CD8-positive, alpha-beta memory T cell (primary cell): ENCODE measurements at regions of chr14 and their contacts with region 1.

Region 1: DNA sequence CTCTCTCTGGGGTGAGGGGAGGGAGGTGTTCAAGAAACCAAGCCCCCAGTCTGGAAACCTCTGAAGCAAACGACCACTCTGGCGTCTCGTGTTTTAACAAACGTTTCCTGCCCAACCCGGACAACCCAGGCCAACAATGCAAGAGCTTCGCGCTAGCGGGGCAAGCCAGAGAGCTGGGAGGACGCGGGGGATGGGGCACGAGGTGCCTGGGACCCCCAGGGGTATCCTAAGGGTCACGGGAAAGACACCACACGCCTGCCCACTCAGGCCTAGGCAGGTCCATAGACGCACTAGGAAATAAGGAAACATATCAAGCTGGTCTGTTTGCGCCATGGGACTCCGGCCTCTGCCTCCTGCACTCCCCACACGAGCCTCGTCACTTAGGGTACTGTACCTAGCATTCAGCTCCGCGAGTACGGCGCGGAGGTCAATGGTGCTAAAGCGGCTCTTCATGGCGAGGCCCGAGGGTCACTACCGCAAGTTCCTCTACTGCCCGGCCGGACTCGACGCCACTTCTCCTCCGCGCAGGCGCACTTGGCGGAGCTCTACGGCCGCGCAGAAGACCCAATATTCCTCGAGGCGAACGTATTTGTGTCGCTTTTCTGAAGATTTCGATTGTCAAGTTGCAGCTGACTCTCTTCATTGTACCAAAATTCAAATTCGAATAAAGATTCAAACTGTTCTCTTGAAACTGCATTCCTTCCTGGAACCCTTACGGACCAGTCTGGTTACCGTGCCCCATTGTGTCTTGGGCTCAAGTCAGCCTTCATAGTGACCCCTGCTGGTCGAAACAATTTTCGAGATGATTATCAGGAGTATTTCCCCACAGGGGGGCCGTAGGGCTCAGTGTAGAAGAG is at the start of gene NEMF:
- DNase-seq: peak; percentile 59 to 82 (median 72)
- H3K4me3 ChIP-seq: peak within 1 kb of the TSS; percentile 93
- H3K4me3 Mint-ChIP-seq: peak within 1 kb of the TSS; percentile 94 to 99 (median 96)
- H3K27ac ChIP-seq: peak within 1 kb of the TSS; percentile 79
- H3K27ac Mint-ChIP-seq: peak within 1 kb of the TSS; percentile 83 to 99 (median 96)
- H3K4me1 ChIP-seq: peaks cover 28% of the 10 kb centered on the region
- H3K4me1 Mint-ChIP-seq: peaks cover 40 to 51% (median 50%) of the 10 kb centered on the region in 3 donors
- H3K27me3 ChIP-seq: no peaks in the 10 kb centered on the region
- H3K27me3 Mint-ChIP-seq: no peaks in the 10 kb centered on the region
- total RNA-seq, gene NEMF: 69.2 to 71.9 TPM

Region 2: GRCh38 chr14:49633640-49634546 is 218.6 kb before region 1 on chr14:
- CTCF ChIA-PET with region 1: interaction called, 17 read pairs
- POLR2A ChIA-PET with region 1: interaction called, 8 read pairs
- DNase-seq: peak; percentile 90 to 96 (median 94)
- H3K4me3 ChIP-seq: peak overlapping the region; percentile 96
- H3K4me3 Mint-ChIP-seq: peak overlapping the region; percentile 92 to 100 (median 95)
- H3K27ac ChIP-seq: peak overlapping the region; percentile 99
- H3K27ac Mint-ChIP-seq: peak overlapping the region; percentile 91 to 100 (median 95)
- H3K4me1 ChIP-seq: peaks cover 32% of the 10 kb centered on the region
- H3K4me1 Mint-ChIP-seq: peaks cover 47 to 78% (median 60%) of the 10 kb centered on the region in 3 donors
- H3K27me3 ChIP-seq: no peaks in the 10 kb centered on the region
- H3K27me3 Mint-ChIP-seq: peaks cover 0 to 1% of the 10 kb centered on the region in 2 donors

Region 3: DNA sequence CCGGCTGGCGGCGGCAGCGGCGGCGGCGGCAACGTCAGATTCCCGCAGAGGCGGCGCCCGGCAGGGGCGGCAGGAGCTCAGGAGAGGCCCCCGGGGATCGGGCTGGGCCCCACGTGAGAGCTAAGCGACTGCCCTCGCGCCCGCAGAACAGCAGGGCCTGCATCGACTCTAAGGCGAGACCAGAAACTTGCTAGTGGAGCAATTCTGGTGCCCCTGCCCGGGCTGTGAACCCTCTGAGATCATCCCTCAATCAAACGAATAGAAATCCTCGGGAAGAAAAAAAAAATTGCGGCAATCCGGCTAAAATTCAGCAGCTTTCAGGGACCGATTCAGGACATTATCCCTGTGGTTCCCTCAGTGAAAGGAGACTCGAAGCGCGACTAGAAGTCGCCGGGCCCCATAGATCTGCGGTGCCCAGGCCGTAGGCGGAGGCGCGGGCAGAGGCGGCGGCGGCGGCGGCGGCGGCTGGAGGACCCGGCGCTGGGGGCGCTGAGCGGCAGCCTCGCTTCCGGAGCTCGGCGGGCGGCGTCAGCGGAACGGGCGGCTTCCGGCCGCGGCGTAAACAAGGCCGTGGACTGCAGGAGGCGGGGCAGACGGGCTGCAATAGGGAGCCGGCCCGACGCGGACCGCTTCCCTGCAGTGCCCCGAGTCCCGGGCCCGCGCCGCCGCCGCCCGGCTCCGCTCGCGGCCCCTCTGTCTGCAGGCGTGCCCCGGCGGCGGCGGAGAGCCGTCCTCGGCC is 84.8 kb before region 1 on chr14 and contains the start of gene KLHDC2:
- CTCF ChIA-PET with region 1: interaction called, 6 read pairs
- POLR2A ChIA-PET with region 1: interaction called, 15 read pairs
- DNase-seq: peak; percentile 83 to 91 (median 89)
- H3K4me3 ChIP-seq: peak within 1 kb of the TSS; percentile 99
- H3K4me3 Mint-ChIP-seq: peak within 1 kb of the TSS; percentile 96 to 99 (median 98)
- H3K27ac ChIP-seq: peak within 1 kb of the TSS; percentile 98
- H3K27ac Mint-ChIP-seq: peak within 1 kb of the TSS; percentile 98 to 100 (median 99)
- H3K4me1 ChIP-seq: peaks cover 28% of the 10 kb centered on the region
- H3K4me1 Mint-ChIP-seq: peaks cover 30 to 43% (median 42%) of the 10 kb centered on the region in 3 donors
- H3K27me3 ChIP-seq: no peaks in the 10 kb centered on the region
- H3K27me3 Mint-ChIP-seq: peaks cover 0 to 3% of the 10 kb centered on the region in 2 donors
- total RNA-seq, gene KLHDC2: 28.9 to 29.0 TPM

Region 4: GRCh38 chr14:49778421-49778820 is 74.1 kb before region 1 on chr14:
- CTCF ChIA-PET with region 1: no interaction called
- POLR2A ChIA-PET with region 1: no interaction called
- DNase-seq: no peak
- H3K4me3 ChIP-seq: no peak overlapping the region
- H3K4me3 Mint-ChIP-seq: no peak overlapping the region
- H3K27ac ChIP-seq: no peak overlapping the region
- H3K27ac Mint-ChIP-seq: no peak overlapping the region
- H3K4me1 ChIP-seq: no peaks in the 10 kb centered on the region
- H3K4me1 Mint-ChIP-seq: peaks cover 10 to 23% (median 18%) of the 10 kb centered on the region in 3 donors
- H3K27me3 ChIP-seq: no peaks in the 10 kb centered on the region
- H3K27me3 Mint-ChIP-seq: no peaks in the 10 kb centered on the region

Region 5: GRCh38 chr14:49828640-49829039 is 23.9 kb before region 1 on chr14:
- CTCF ChIA-PET with region 1: interaction called, 15 read pairs
- POLR2A ChIA-PET with region 1: no interaction called
- DNase-seq: no peak
- H3K4me3 ChIP-seq: no peak overlapping the region
- H3K4me3 Mint-ChIP-seq: no peak overlapping the region
- H3K27ac ChIP-seq: no peak overlapping the region
- H3K27ac Mint-ChIP-seq: no peak overlapping the region
- H3K4me1 ChIP-seq: no peaks in the 10 kb centered on the region
- H3K4me1 Mint-ChIP-seq: peaks cover 6 to 8% (median 7%) of the 10 kb centered on the region in 3 donors
- H3K27me3 ChIP-seq: no peaks in the 10 kb centered on the region
- H3K27me3 Mint-ChIP-seq: no peaks in the 10 kb centered on the region

Region 6: DNA sequence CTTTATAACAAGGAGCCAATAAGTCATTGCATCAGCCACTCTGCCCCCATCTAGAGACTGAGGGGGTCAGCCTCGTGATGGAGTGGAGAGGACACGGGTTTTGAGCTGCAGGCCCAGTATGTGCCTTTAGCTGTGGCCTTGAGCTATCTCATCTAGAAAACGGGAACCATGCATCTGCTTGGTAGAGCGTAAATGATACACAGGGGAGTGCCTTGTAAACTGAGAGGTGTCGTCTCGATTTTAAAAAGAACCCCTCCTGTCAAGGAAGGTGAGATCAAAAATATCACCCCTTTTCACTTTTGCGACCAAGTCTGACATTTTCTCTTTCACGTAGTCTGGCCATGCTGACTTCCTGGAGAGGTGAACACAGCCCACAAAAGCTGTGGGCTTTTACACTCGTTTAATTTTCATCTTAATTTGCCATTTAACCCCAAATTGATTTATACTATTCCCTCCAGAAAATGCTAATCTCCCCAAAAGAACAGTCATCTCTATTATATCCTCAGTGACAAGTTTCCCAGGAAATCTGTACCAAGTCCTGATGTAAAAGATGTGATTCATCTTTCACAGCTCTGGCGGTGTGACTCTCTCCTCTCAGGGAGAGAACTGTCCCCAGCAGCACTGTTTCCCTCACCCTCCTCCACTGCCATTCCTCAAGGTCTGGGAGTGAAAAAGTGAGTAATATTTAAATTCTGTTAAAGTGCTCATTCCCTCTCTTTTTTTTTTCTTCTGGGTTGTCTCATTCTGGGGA is 233.2 kb after region 1 on chr14:
- CTCF ChIA-PET with region 1: interaction called, 10 read pairs
- POLR2A ChIA-PET with region 1: no interaction called
- DNase-seq: peak; percentile 21 to 54 (median 44)
- H3K4me3 ChIP-seq: peak overlapping the region; percentile 7
- H3K4me3 Mint-ChIP-seq: peak overlapping the region; percentile 6 to 89 (median 71)
- H3K27ac ChIP-seq: peak overlapping the region; percentile 35
- H3K27ac Mint-ChIP-seq: peak overlapping the region; percentile 89 to 99 (median 97)
- H3K4me1 ChIP-seq: peaks cover 93% of the 10 kb centered on the region
- H3K4me1 Mint-ChIP-seq: peaks cover 75 to 93% (median 86%) of the 10 kb centered on the region in 3 donors
- H3K27me3 ChIP-seq: no peaks in the 10 kb centered on the region
- H3K27me3 Mint-ChIP-seq: no peaks in the 10 kb centered on the region

Region 7: GRCh38 chr14:50101417-50101816 is 248.9 kb after region 1 on chr14:
- CTCF ChIA-PET with region 1: interaction called, 17 read pairs
- POLR2A ChIA-PET with region 1: interaction called, 3 read pairs
- DNase-seq: no peak
- H3K4me3 ChIP-seq: no peak overlapping the region
- H3K4me3 Mint-ChIP-seq: no peak overlapping the region
- H3K27ac ChIP-seq: no peak overlapping the region
- H3K27ac Mint-ChIP-seq: peak overlapping the region in 2 of 8 donors; percentile 74 to 87
- H3K4me1 ChIP-seq: peaks cover 55% of the 10 kb centered on the region
- H3K4me1 Mint-ChIP-seq: peaks cover 37 to 62% (median 53%) of the 10 kb centered on the region in 3 donors
- H3K27me3 ChIP-seq: no peaks in the 10 kb centered on the region
- H3K27me3 Mint-ChIP-seq: no peaks in the 10 kb centered on the region

Region 8: GRCh38 chr14:50116181-50116956 is 263.8 kb after region 1 on chr14 and contains the start of gene VCPKMT:
- CTCF ChIA-PET with region 1: interaction called, 11 read pairs
- POLR2A ChIA-PET with region 1: interaction called, 10 read pairs
- DNase-seq: peak; percentile 93 to 97 (median 96)
- H3K4me3 ChIP-seq: peak within 1 kb of the TSS; percentile 40
- H3K4me3 Mint-ChIP-seq: peak within 1 kb of the TSS; percentile 95 to 97 (median 97)
- H3K27ac ChIP-seq: peak within 1 kb of the TSS; percentile 78
- H3K27ac Mint-ChIP-seq: peak within 1 kb of the TSS; percentile 94 to 99 (median 99)
- H3K4me1 ChIP-seq: peaks cover 26% of the 10 kb centered on the region
- H3K4me1 Mint-ChIP-seq: peaks cover 23 to 42% (median 29%) of the 10 kb centered on the region in 3 donors
- H3K27me3 ChIP-seq: no peaks in the 10 kb centered on the region
- H3K27me3 Mint-ChIP-seq: no peaks in the 10 kb centered on the region
- total RNA-seq, gene VCPKMT: 16.5 to 19.9 TPM